ENCODE measurements at regions of chr10 and their contacts with region 1.

Region 1: GRCh38 chr10:121927841-121928527 is at the start of gene ATE1:
- DNase-seq: no peak
- ATAC-seq: peak; percentile 94
- H3K4me3 ChIP-seq: peak within 1 kb of the TSS; percentile 69 to 79
- H3K27ac ChIP-seq: peak within 1 kb of the TSS; percentile 84
- H3K4me1 ChIP-seq: peaks cover 16% of the 10 kb centered on the region
- H3K27me3 ChIP-seq: no peaks in the 10 kb centered on the region
- CTCF ChIP-seq: no peak
- total RNA-seq, gene ATE1: 45.5 TPM

Region 2: DNA sequence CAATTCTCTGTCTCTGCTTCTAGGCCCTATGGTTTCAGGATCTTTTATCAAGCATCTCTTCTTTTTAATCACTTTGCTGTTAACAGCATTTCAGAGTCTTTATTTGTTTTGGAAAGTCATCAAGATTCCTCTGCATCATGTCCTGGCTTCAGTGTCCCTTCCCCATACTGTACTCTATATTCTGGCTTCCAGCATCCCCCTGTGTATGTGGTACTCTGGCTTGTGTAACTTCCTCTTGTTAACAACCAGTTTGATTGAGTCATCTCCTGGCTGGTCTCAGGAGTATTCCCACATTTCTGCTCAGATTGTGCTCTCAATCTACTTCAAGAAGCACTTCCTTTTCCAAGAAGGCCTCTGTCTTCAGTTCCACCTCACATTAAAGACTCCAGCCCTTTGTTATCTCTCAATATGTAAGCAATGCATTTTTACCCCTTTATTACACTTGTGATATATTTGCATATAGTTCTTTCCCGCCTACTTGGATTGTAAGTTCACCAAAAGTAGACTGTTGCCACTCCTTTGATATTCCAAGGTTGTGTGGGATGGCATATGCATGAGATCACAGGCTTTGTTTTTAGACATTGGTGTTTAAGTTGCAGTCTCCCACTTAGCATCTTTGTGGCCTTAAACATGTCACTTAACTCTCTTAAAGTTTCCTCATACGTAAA is 14.9 kb after region 1 on chr10:
- CTCF ChIA-PET with region 1: no interaction called
- POLR2A ChIA-PET with region 1: interaction called, 12 read pairs
- in situ Hi-C with region 1: no loop called
- intact Hi-C with region 1: no loop called
- DNase-seq: no peak
- ATAC-seq: peak; percentile 69; the same call in 1 of the 2 replicates
- H3K4me3 ChIP-seq: no peak overlapping the region
- H3K27ac ChIP-seq: no peak overlapping the region
- H3K4me1 ChIP-seq: peaks cover 10% of the 10 kb centered on the region; the same call in 1 of the 2 replicates
- H3K27me3 ChIP-seq: no peaks in the 10 kb centered on the region
- CTCF ChIP-seq: no peak

Measured in Panc1 (cell line).